ENCODE measurements at regions of chr6 and their contacts with region 1.

Region 1: DNA sequence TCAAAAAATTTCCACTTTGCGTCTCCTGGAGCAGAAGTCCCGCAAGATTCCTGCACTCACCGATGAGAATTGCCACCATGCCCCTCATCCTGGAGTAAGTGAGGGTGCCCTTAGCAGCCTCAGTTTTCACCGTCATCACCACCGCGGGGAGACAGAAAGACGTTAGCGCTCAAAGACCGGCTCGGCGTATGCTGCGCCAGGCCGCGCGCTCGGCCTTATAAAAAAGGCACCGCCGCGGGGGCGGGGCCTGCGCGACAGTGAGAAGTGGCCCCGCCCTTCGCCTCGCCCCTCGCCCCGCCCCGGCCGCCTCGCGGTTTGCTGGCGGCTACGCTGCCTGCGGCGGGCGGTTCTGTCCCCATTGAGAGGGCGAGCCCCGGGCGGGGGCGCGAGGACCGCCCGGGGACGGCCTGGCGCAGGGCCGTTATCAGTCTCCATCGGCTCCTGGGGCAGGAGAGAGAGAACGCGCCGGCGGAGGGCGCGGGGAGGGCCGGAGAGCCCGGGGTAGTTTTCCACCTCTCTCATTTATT is 122.3 kb upstream of the SLC2A12 start:
- DNase-seq: peak; percentile 82 to 93
- H3K4me3 ChIP-seq: peak overlapping the region; percentile 73
- H3K27ac ChIP-seq: peak overlapping the region; percentile 84
- H3K4me1 ChIP-seq: peaks cover 21% of the 10 kb centered on the region
- H3K27me3 ChIP-seq: no peaks in the 10 kb centered on the region
- CTCF ChIP-seq: no peak

Region 2: GRCh38 chr6:133891149-133891926 is 283.4 kb before region 1 on chr6:
- CTCF ChIA-PET with region 1: no interaction called
- POLR2A ChIA-PET with region 1: no interaction called
- intact Hi-C with region 1: no loop called
- DNase-seq: peak in 1 of 2 experiments; percentile 18
- H3K4me3 ChIP-seq: peak overlapping the region; percentile 84
- H3K27ac ChIP-seq: no peak overlapping the region
- H3K4me1 ChIP-seq: peaks cover 7% of the 10 kb centered on the region; the same call in 1 of the 2 replicates
- H3K27me3 ChIP-seq: no peaks in the 10 kb centered on the region
- CTCF ChIP-seq: no peak

Region 3: GRCh38 chr6:134223796-134224420 is 49.2 kb after region 1 on chr6:
- CTCF ChIA-PET with region 1: no interaction called
- POLR2A ChIA-PET with region 1: no interaction called
- intact Hi-C with region 1: no loop called
- DNase-seq: no peak
- H3K4me3 ChIP-seq: no peak overlapping the region
- H3K27ac ChIP-seq: no peak overlapping the region
- H3K4me1 ChIP-seq: no peaks in the 10 kb centered on the region
- H3K27me3 ChIP-seq: no peaks in the 10 kb centered on the region
- CTCF ChIP-seq: no peak

Region 4: GRCh38 chr6:134288538-134289203 is 113.9 kb after region 1 on chr6:
- CTCF ChIA-PET with region 1: no interaction called
- POLR2A ChIA-PET with region 1: no interaction called
- intact Hi-C with region 1: loop called (anchors 1 kb)
- DNase-seq: peak in 1 of 2 experiments; percentile 99
- H3K4me3 ChIP-seq: no peak overlapping the region
- H3K27ac ChIP-seq: peak overlapping the region; percentile 87
- H3K4me1 ChIP-seq: peaks cover 29% of the 10 kb centered on the region
- H3K27me3 ChIP-seq: no peaks in the 10 kb centered on the region
- CTCF ChIP-seq: no peak

Region 5: DNA sequence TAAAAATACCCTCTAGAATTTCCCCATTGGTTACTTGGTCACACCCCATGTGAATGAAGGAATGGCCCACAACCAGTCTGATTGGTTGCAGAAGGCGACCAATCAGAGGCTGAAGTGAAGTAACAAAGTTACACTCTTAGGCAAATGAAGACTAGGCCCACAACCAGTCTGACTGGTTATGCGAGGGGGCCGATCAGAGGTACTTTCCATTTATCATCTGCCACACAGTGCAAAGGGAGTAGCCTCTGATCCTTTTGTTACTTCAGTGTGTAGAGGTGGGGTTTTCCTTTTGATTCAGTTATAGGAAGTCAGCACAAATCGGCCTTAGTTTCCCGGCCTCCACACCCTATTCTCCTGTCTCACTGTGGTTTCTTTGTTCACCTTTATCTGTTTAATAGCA is 204.4 kb after region 1 on chr6:
- CTCF ChIA-PET with region 1: no interaction called
- POLR2A ChIA-PET with region 1: no interaction called
- intact Hi-C with region 1: loop called (anchors 1 kb)
- DNase-seq: peak; percentile 78 to 93
- H3K4me3 ChIP-seq: peak overlapping the region; percentile 39
- H3K27ac ChIP-seq: peak overlapping the region; percentile 64
- H3K4me1 ChIP-seq: peaks cover 30% of the 10 kb centered on the region
- H3K27me3 ChIP-seq: no peaks in the 10 kb centered on the region
- CTCF ChIP-seq: no peak

Region 6: DNA sequence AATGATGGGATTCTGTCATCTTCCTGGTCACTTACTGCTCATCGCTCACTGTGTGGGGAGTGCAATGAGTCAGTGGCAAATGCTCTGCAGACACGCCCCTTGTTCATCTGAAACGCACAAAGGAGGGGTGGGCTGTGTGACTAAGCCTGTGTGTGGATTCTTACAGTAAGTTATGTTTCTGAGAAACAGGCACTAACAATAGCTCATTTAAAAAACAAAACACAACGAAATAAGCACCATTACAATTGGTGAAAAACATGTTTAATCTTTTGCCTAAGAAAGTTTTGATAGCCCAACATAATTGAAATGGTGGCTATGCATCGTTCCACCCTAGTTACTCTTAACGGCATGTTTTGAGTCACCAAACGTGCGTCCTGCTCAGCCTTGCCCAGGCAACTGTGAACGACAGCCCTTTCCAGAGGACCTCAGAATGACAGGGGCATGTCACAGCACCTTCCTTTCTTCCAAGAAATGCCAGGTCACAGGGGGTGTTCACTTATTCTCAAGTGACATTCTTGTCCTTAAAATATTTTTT is 261.6 kb after region 1 on chr6:
- CTCF ChIA-PET with region 1: no interaction called
- POLR2A ChIA-PET with region 1: interaction called, 10 read pairs
- intact Hi-C with region 1: loop called (anchors 1 kb)
- DNase-seq: peak; percentile 75 to 96
- H3K4me3 ChIP-seq: peak overlapping the region; percentile 36; the same call in 1 of the 2 replicates
- H3K27ac ChIP-seq: peak overlapping the region; percentile 85
- H3K4me1 ChIP-seq: peaks cover 29% of the 10 kb centered on the region
- H3K27me3 ChIP-seq: no peaks in the 10 kb centered on the region
- CTCF ChIP-seq: no peak

Region 7: DNA sequence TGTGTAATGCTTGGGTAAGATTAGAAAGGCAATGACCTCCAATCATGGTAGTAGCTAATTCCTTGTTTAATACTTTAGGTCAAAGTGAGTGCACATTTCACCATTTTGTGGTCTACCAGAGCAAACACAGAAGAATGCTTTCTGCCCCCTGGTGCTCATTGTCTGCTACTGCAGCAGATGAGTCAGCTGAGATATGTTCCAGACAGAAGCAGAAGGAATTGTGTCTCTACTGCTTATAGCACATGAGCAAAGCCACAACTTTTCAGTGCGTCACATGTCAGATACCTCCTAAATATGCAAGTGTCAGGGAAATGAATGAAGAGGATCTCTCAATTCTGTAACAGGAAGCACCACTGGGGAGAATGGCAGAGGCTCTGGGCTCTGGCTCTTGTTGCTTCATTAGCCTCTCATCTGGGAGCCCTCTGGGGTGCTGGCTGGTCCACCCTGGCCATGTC is 466.3 kb after region 1 on chr6:
- CTCF ChIA-PET with region 1: interaction called, 3 read pairs
- POLR2A ChIA-PET with region 1: no interaction called
- intact Hi-C with region 1: loop called (anchors 1 kb)
- DNase-seq: peak; percentile 65 to 82
- H3K4me3 ChIP-seq: no peak overlapping the region
- H3K27ac ChIP-seq: no peak overlapping the region
- H3K4me1 ChIP-seq: peaks cover 32% of the 10 kb centered on the region
- H3K27me3 ChIP-seq: no peaks in the 10 kb centered on the region
- CTCF ChIP-seq: peak; percentile 98

Region 8: GRCh38 chr6:134882426-134883038 is 707.8 kb after region 1 on chr6:
- CTCF ChIA-PET with region 1: interaction called, 4 read pairs
- POLR2A ChIA-PET with region 1: no interaction called
- intact Hi-C with region 1: loop called (anchors 1 kb)
- DNase-seq: peak in 1 of 2 experiments; percentile 59
- H3K4me3 ChIP-seq: no peak overlapping the region
- H3K27ac ChIP-seq: no peak overlapping the region
- H3K4me1 ChIP-seq: no peaks in the 10 kb centered on the region
- H3K27me3 ChIP-seq: no peaks in the 10 kb centered on the region
- CTCF ChIP-seq: peak; percentile 100